RWPE1 (cell line): ENCODE measurements at regions of chr1 and their contacts with region 1.

Region 1: GRCh38 chr1:30801771-30802198 is 44.2 kb upstream of the LAPTM5 start:
- DNase-seq: peak; percentile 51
- H3K27ac ChIP-seq: no peak overlapping the region
- CTCF ChIP-seq: peak; percentile 94

Region 2: GRCh38 chr1:30675761-30676160 is 126.0 kb before region 1 on chr1:
- CTCF ChIA-PET with region 1: no interaction called
- POLR2A ChIA-PET with region 1: no interaction called
- DNase-seq: peak; percentile 26
- H3K27ac ChIP-seq: no peak overlapping the region
- CTCF ChIP-seq: no peak

Region 3: GRCh38 chr1:30718636-30719405 is 83.0 kb before region 1 on chr1:
- CTCF ChIA-PET with region 1: interaction called, 23 read pairs
- POLR2A ChIA-PET with region 1: no interaction called
- DNase-seq: peak; percentile 54
- H3K27ac ChIP-seq: peak overlapping the region; percentile 90
- CTCF ChIP-seq: peak; percentile 88

Region 4: DNA sequence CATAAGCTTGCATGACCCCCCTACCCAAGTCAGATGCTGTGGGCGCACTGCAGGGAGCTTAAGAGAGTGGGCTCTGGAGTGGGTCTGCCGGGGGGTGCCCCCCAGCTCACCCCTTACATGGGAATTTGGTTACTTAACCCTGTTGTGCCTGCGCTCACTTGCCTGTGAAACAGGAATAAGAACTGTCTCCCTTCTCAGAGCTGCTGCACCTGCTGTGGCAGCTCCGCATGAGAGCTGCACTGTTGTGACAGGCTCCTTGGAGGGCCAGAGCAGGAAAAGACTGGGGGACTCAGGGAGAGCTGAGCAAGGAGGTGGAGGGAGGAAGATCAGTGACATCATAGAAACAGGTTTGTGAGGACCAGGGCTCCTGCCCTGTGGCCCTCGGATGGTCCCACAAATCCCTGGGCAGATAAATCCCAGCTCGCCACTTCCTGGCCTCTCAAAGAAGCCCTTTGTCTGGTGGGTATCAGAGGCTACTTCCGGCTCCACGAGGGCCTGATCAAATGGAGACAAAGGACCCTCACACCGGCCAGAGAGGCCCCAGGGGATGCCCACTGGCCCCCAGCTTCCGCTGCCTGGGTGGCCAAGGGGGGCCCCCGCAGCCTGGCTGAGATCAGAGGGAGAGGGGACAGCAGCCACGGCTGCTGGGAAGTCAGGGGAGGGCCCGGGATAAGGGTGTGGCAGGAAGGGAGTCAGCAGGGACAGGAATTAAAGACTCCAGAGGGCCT is 15.4 kb before region 1 on chr1:
- CTCF ChIA-PET with region 1: interaction called, 16 read pairs
- POLR2A ChIA-PET with region 1: no interaction called
- DNase-seq: no peak
- H3K27ac ChIP-seq: peak overlapping the region; percentile 58
- CTCF ChIP-seq: no peak

Region 5: DNA sequence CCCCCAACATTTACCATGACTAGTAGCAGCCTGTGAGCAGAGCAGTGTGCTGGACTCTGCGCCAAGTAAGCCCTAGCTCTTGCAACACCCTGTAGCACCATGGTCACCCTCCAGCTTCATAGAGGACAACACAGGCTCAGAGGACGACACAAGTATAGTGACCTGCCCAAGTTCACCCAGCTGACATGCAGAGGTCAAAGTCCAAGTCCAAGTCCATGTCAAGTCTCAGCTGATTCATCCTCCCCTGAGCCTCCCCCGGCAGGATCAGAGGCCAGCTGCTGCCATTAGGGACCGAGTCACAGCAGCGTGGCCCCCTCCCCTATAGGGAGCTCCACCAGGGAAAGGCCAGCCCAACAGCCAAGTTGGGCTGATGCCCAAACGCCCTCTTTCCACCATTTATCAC is 90.9 kb after region 1 on chr1:
- CTCF ChIA-PET with region 1: interaction called, 10 read pairs
- POLR2A ChIA-PET with region 1: no interaction called
- DNase-seq: no peak
- H3K27ac ChIP-seq: no peak overlapping the region
- CTCF ChIP-seq: no peak

Region 6: DNA sequence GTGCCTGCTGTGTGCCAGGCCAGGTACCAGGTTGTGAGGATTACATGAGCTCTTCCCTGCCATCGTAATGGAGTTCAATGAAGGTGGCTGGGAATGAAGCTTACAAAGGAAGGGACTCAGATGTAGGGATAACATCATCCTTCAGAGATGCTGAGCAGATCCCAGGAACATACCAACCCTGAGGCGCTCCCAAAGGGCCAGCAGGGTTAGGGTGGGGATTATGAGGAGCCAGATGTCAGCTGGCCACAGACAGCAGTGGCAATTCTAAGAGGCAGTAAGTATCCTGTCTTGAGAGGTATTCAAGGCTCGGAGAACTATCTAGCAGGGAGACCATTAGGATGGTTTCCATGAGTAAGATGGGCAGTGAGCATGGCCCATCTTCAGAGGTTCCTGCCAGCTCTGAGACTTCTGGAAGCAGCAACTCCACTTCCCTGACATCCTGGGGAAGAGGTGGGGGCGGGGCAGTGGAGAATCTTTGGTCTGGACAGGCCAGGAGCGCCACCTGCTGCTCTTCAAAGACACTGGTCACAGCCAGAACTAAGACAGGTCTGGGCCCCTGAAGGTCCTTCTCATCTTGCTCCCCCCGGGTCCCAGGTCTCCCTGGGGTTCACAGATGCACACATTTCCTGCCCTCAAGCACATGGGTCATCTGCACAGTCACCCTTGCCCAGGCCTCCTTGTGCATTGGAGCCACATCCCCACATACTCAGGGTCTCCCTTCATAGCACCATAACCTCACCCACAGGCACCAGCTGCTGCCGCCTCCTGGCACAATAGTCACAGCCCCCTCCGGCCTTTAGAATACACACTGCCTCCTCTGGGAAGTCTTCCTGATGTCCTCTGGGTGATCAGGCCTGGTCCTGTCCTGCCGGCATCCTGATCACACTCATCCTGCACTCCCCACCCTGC is 109.5 kb after region 1 on chr1:
- CTCF ChIA-PET with region 1: interaction called, 186 read pairs
- POLR2A ChIA-PET with region 1: no interaction called
- DNase-seq: peak; percentile 86
- H3K27ac ChIP-seq: no peak overlapping the region
- CTCF ChIP-seq: peak; percentile 84